ENCODE measurements at regions of chr1 and their contacts with region 1.

Region 1: GRCh38 chr1:226121587-226122400 is 59.3 kb downstream of the H3-3A start:
- DNase-seq: peak; percentile 56 to 94 (median 76)
- ATAC-seq: peak; percentile 76 to 85 (median 80)
- H3K4me3 ChIP-seq: peak overlapping the region; percentile 41 to 80 (median 69)
- H3K27ac ChIP-seq: peak overlapping the region; percentile 75 to 95 (median 87)
- H3K4me1 ChIP-seq: peaks cover 2 to 27% (median 3%) of the 10 kb centered on the region in 3 donors
- H3K27me3 ChIP-seq: no peaks in the 10 kb centered on the region
- CTCF ChIP-seq: peak; percentile 61 to 85 (median 74)

Region 2: GRCh38 chr1:225182716-225183115 is 939.1 kb before region 1 on chr1:
- intact Hi-C with region 1: no loop called
- DNase-seq: no peak
- ATAC-seq: no peak
- H3K4me3 ChIP-seq: no peak overlapping the region
- H3K27ac ChIP-seq: no peak overlapping the region
- H3K4me1 ChIP-seq: no peaks in the 10 kb centered on the region
- H3K27me3 ChIP-seq: no peaks in the 10 kb centered on the region
- CTCF ChIP-seq: no peak

Region 3: DNA sequence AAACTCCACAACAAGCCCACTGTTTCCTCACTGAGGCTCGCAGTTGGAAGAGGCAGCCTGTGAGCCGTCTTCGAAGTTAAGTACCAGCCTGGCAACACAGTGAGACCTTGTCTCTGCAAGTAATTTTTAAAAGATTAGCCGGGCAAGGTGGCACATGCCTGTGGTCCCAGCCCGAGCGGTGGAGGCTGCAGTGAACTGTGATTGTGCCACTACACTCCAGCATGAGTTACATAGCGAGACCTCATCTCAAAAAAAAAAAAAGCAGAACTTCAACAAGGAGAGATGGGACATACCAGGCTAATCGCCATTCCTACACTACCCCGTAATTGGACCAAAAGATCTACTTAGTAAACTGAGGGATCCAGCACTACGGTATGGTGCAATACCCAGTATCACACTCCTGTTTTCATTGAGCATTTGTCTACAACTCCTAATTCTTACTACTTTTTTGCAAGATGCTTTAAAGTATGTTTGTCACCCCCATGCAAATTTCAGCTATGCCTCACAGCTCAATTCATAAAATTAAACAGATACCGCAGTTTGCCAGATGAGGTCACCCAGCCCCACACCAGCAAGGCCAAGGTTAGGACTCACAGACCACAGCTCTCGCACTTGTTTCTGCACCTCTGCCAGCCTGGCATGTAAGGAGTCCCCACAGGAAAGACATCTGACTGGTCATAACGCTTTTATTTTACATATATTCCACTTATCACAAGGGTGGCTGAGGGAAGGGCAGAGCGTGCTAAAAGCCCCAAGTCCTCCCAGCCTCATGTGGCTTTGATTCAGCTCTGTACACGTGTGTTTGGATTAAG is 143.7 kb before region 1 on chr1:
- intact Hi-C with region 1: no loop called
- DNase-seq: peak in 2 of 6 donors; percentile 50 to 53
- ATAC-seq: peak; percentile 12 to 46 (median 36)
- H3K4me3 ChIP-seq: no peak overlapping the region
- H3K27ac ChIP-seq: no peak overlapping the region
- H3K4me1 ChIP-seq: peaks cover 12 to 33% (median 17%) of the 10 kb centered on the region in 3 donors
- H3K27me3 ChIP-seq: no peaks in the 10 kb centered on the region
- CTCF ChIP-seq: no peak

Region 4: DNA sequence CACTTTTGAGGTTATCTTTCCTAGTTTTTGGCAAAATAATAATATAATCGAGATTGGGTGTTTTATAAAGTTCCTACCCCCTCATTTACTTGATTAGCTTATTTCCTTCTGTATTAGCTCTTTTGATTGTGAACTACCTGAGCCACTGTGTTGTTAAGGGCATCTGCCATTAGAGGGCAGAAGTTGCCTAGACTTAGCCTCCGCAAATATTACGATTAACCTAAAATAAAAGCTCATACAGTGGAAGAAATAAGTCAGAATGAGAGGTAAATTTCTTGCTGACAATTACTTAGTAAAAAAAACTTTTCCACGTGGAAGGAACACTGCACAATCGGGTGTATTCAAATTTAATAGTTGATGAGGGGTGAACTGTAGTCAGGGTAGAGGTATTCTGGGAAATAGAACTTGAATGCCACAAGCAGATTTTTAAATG is 57.0 kb before region 1 on chr1:
- intact Hi-C with region 1: loop called in 1 of 3 experiments (anchors 5 kb)
- DNase-seq: peak in 2 of 6 donors; percentile 38 to 48
- ATAC-seq: peak; percentile 18 to 54 (median 34)
- H3K4me3 ChIP-seq: peak overlapping the region in 3 of 4 donors; percentile 75 to 85 (median 80)
- H3K27ac ChIP-seq: peak overlapping the region in 2 of 4 donors; percentile 99 to 100
- H3K4me1 ChIP-seq: peaks cover 14 to 40% (median 33%) of the 10 kb centered on the region in 3 donors
- H3K27me3 ChIP-seq: no peaks in the 10 kb centered on the region
- CTCF ChIP-seq: peak in 1 of 4 donors; percentile 6

Region 5: GRCh38 chr1:226083302-226084101 is 38.3 kb before region 1 on chr1:
- intact Hi-C with region 1: no loop called
- DNase-seq: peak; percentile 87 to 99 (median 94)
- ATAC-seq: peak; percentile 94 to 99 (median 98)
- H3K4me3 ChIP-seq: peak overlapping the region; percentile 50 to 81 (median 64)
- H3K27ac ChIP-seq: peak overlapping the region; percentile 40 to 81 (median 75)
- H3K4me1 ChIP-seq: peaks cover 0 to 3% (median 0%) of the 10 kb centered on the region in 3 donors
- H3K27me3 ChIP-seq: no peaks in the 10 kb centered on the region
- CTCF ChIP-seq: no peak

Region 6: DNA sequence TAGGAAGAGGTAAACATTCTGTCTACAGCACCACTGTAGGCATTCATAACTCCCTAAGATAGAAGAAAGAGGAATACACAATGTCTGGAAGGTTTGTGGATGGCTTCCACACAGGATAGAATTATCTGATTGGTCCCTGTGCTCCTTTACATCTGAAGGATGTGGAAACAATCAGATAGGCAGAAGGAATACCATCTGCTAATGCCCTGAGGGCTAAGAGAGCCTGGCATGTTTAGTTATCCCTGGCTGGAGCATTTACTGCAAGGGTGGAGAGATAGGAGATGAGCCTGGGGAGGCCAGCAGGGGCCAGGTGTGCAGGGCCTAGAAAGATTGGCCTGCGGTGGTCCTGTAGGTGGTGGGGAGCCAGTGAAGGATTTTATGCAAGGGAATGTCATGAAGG is 73.3 kb after region 1 on chr1:
- intact Hi-C with region 1: loop called in 2 of 3 experiments (anchors 2 to 5 kb)
- DNase-seq: no peak
- ATAC-seq: no peak
- H3K4me3 ChIP-seq: no peak overlapping the region
- H3K27ac ChIP-seq: no peak overlapping the region
- H3K4me1 ChIP-seq: no peaks in the 10 kb centered on the region
- H3K27me3 ChIP-seq: no peaks in the 10 kb centered on the region
- CTCF ChIP-seq: no peak

Region 7: GRCh38 chr1:226201029-226201593 is 79.3 kb after region 1 on chr1:
- intact Hi-C with region 1: loop called in 2 of 3 experiments (anchors 2 to 5 kb)
- DNase-seq: no peak
- ATAC-seq: peak in 1 of 4 donors; percentile 39
- H3K4me3 ChIP-seq: no peak overlapping the region
- H3K27ac ChIP-seq: no peak overlapping the region
- H3K4me1 ChIP-seq: no peaks in the 10 kb centered on the region
- H3K27me3 ChIP-seq: no peaks in the 10 kb centered on the region
- CTCF ChIP-seq: no peak

Region 8: GRCh38 chr1:227586733-227587132 is 1464.9 kb after region 1 on chr1:
- intact Hi-C with region 1: no loop called
- DNase-seq: no peak
- ATAC-seq: no peak
- H3K4me3 ChIP-seq: no peak overlapping the region
- H3K27ac ChIP-seq: no peak overlapping the region
- H3K4me1 ChIP-seq: no peaks in the 10 kb centered on the region
- H3K27me3 ChIP-seq: no peaks in the 10 kb centered on the region
- CTCF ChIP-seq: no peak